GM10248 (cell line): ENCODE measurements at regions of chr3 and their contacts with region 1.

Region 1: DNA sequence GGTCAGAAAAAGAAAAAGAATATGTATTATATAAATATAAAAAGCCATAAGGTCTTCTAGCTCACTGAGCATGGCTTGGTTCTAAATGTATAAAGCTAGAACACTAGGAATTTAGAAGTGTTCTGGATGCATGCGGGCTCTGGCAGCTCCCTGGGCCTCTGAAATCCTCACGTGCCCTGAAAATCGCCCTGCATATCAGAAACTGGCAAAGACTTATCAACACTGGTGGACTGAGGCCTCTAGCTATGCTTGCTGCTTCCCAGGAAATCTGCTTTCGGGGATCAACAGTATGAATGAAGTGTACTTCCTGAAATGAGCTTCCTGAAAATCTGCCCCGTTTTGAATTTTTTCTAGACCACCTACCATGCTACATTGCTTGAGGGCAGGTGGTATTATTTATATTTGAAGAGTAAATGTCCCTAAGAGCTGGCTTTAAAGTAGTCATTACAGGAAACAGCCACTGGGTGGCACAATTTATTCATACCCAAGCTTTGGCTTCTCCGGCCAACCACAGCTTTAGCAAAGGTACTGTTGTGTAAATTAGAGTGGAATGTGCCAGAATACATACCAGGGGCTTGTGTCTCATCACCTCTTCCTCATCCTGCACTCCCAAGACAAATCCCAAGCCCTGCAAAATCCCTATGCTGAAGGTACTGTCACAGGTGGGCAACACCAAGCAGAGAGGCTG is 17.7 kb downstream of the CRTAP start:
- DNase-seq: peak; percentile 76
- CTCF ChIP-seq: peak; percentile 65

Region 2: GRCh38 chr3:32947789-32948238 is 183.7 kb before region 1 on chr3:
- CTCF ChIA-PET with region 1: interaction called, 10 read pairs
- POLR2A ChIA-PET with region 1: no interaction called
- DNase-seq: peak; percentile 64
- CTCF ChIP-seq: peak; percentile 73

Region 3: GRCh38 chr3:33113772-33114621 is 17.5 kb before region 1 on chr3 and contains the start of gene CRTAP:
- CTCF ChIA-PET with region 1: interaction called, 116 read pairs
- POLR2A ChIA-PET with region 1: no interaction called
- DNase-seq: peak; percentile 84
- CTCF ChIP-seq: no peak

Region 4: GRCh38 chr3:33360136-33360825 is 228.8 kb after region 1 on chr3:
- CTCF ChIA-PET with region 1: interaction called, 12 read pairs
- POLR2A ChIA-PET with region 1: no interaction called
- DNase-seq: no peak
- CTCF ChIP-seq: no peak

Region 5: DNA sequence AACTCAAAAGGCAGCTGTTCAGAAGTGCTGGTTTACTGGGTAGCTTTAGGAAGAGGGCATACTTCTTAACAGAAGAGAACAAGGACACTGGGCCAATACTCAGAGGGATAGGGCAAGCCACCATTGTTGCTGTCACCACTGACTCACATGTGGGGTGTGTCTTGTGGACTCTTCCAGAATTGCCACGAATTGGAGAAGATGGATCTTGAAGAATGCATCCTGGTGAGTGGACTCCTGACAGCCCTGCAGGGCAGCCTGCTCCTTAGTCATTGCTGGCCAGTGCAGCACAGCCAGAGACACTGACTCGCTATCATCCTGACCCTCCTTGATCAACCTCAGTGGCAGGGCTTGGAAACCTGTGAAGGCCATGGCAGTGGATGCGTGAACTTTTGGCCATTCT is 246.5 kb after region 1 on chr3:
- CTCF ChIA-PET with region 1: interaction called, 108 read pairs
- POLR2A ChIA-PET with region 1: no interaction called
- DNase-seq: no peak
- CTCF ChIP-seq: no peak

Region 6: DNA sequence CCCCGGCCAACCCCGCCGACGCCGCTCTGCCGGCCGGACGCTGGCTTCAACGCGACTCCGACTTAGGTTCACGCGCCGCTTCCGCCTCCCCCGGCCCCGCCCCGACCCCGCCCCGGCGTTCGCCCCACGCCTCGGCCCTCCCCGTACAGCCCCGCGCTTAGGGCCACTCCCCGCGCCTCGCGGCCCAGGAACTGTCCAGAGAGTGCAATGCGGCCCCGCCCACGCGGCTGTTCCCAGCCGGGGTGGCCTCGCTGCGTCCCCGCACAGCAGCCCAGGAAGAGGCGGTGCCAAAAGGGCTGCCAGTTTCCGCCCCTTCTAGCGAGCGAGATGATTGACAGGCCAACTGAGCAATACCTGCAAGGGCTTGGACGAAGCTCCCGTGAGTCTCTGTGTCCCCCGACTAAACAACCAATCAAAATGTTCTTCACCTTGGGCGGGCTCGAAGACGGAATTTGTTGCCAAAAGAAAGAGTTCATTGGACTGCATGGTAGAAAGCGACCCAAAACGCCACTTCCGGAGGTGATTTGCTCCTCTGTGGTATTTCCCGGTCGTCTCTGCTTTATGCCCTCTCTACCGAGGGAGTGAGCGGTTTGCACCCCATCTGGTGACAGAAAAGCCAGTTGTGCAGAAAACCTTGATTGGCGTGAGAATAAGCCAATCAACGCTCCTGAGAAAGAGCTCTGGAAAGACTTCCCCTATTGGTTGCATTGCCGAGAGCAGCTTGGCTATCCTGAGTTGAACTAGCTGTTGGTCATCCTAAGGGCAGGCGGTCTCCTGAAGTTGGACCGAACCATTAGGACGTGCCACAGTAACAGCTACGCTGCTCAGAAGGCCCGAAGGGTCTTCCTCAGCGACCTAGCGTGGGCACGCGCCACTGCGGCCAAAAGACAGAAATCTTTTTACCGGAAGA is 309.1 kb after region 1 on chr3 and contains the start of gene UBP1:
- CTCF ChIA-PET with region 1: no interaction called
- POLR2A ChIA-PET with region 1: no interaction called
- DNase-seq: peak; percentile 96
- CTCF ChIP-seq: no peak

Region 7: DNA sequence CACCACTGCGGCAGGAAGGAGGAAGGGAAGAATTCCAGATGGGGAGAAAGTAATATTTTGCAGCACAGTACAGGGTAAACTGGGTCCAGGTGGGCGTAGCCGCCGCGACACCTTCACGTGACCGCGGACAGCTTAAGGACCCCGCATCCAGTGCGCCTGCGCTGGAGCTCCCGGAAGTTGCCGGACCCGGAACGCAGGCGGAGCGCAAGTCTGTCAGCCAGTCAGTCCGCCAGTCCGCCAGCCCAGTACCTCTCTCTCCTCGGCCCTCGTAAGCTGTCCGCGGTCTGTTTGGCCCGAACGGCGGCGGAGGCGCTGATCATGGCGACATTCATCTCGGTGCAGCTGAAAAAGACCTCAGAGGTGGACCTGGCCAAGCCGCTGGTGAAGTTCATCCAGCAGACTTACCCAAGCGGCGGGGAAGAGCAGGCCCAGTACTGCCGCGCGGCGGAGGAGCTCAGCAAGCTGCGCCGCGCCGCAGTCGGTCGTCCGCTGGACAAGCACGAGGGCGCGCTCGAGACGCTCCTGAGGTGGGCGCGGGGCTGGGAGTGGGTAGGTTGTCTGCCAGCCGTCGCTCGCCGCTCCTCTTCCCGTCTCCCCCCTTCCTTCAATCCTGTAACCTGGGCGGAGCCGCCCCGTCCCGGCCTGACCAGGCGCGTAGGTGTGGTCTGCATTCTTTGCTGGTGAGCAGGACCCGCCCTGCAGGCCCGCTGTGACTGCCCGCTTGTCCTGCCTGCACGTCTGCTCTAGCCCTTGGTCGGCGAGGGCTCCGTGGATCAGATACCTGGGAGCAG is 667.1 kb after region 1 on chr3 and contains the start of gene PDCD6IP:
- CTCF ChIA-PET with region 1: interaction called, 15 read pairs
- POLR2A ChIA-PET with region 1: no interaction called
- DNase-seq: peak; percentile 93
- CTCF ChIP-seq: peak; percentile 12